ENCODE measurements at regions of chr17 and their contacts with region 1.

Region 1: GRCh38 chr17:54373963-54374362 is 526.7 kb upstream of the TOM1L1 start:
- DNase-seq: no peak
- ATAC-seq: no peak
- H3K4me3 ChIP-seq: no peak overlapping the region
- H3K27ac ChIP-seq: no peak overlapping the region
- H3K4me1 ChIP-seq: no peaks in the 10 kb centered on the region
- H3K27me3 ChIP-seq: no peaks in the 10 kb centered on the region
- CTCF ChIP-seq: no peak
- EP300 ChIP-seq: no peak
- POLR2A ChIP-seq: no peak
- RAD21 ChIP-seq: no peak

Region 2: GRCh38 chr17:54385251-54385650 is 11.3 kb after region 1 on chr17:
- CTCF ChIA-PET with region 1: interaction called, 3 read pairs
- POLR2A ChIA-PET with region 1: no interaction called
- RAD21 ChIA-PET with region 1: no interaction called
- SMC1A ChIA-PET with region 1: interaction called, 11 read pairs
- in situ Hi-C with region 1: no loop called
- intact Hi-C with region 1: no loop called
- DNase-seq: no peak
- ATAC-seq: no peak
- H3K4me3 ChIP-seq: no peak overlapping the region
- H3K27ac ChIP-seq: no peak overlapping the region
- H3K4me1 ChIP-seq: no peaks in the 10 kb centered on the region
- H3K27me3 ChIP-seq: no peaks in the 10 kb centered on the region
- CTCF ChIP-seq: no peak
- EP300 ChIP-seq: no peak
- POLR2A ChIP-seq: no peak
- RAD21 ChIP-seq: no peak